Activated naive CD4-positive, alpha-beta T cell treated with anti-CD3 and anti-CD28 coated beads for 36 hours (primary cell): ENCODE measurements at regions of chr19 and their contacts with region 1.

Region 1: GRCh38 chr19:2269244-2269947 is 12.6 kb downstream of the PEAK3 start:
- DNase-seq: peak; percentile 99
- H3K4me3 Mint-ChIP-seq: peak overlapping the region; percentile 89
- H3K27ac Mint-ChIP-seq: peak overlapping the region; percentile 92
- H3K4me1 Mint-ChIP-seq: peaks cover 43% of the 10 kb centered on the region
- H3K27me3 Mint-ChIP-seq: no peaks in the 10 kb centered on the region

Region 2: GRCh38 chr19:1905071-1905862 is 364.1 kb before region 1 on chr19 and contains the starts of genes ADAT3 and SCAMP4:
- CTCF ChIA-PET with region 1: no interaction called
- intact Hi-C with region 1: no loop called
- DNase-seq: peak; percentile 99
- H3K4me3 Mint-ChIP-seq: peak within 1 kb of the TSS; percentile 89
- H3K27ac Mint-ChIP-seq: peak within 1 kb of the TSS; percentile 89
- H3K4me1 Mint-ChIP-seq: peaks cover 46% of the 10 kb centered on the region
- H3K27me3 Mint-ChIP-seq: no peaks in the 10 kb centered on the region
- total RNA-seq, gene ADAT3: 3.0 to 3.4 TPM
- total RNA-seq, gene SCAMP4: 12.1 to 14.5 TPM

Region 3: GRCh38 chr19:2050991-2051772 is 218.2 kb before region 1 on chr19 and contains the start of gene MKNK2:
- CTCF ChIA-PET with region 1: no interaction called
- intact Hi-C with region 1: loop called (anchors 1 kb)
- DNase-seq: peak; percentile 93
- H3K4me3 Mint-ChIP-seq: peak within 1 kb of the TSS; percentile 85
- H3K27ac Mint-ChIP-seq: peak within 1 kb of the TSS; percentile 93
- H3K4me1 Mint-ChIP-seq: peaks cover 53% of the 10 kb centered on the region
- H3K27me3 Mint-ChIP-seq: no peaks in the 10 kb centered on the region
- total RNA-seq, gene MKNK2: 155 to 157 TPM

Region 4: GRCh38 chr19:2253106-2254053 is 16.0 kb before region 1 on chr19:
- CTCF ChIA-PET with region 1: interaction called, 16 read pairs
- intact Hi-C with region 1: loop called (anchors 1 kb)
- DNase-seq: peak; percentile 59
- H3K4me3 Mint-ChIP-seq: peak overlapping the region; percentile 43
- H3K27ac Mint-ChIP-seq: no peak overlapping the region
- H3K4me1 Mint-ChIP-seq: peaks cover 28% of the 10 kb centered on the region
- H3K27me3 Mint-ChIP-seq: peaks cover 12% of the 10 kb centered on the region

Region 5: GRCh38 chr19:2391118-2391725 is 121.8 kb after region 1 on chr19:
- CTCF ChIA-PET with region 1: interaction called, 3 read pairs
- intact Hi-C with region 1: loop called (anchors 2 kb)
- DNase-seq: peak; percentile 56
- H3K4me3 Mint-ChIP-seq: no peak overlapping the region
- H3K27ac Mint-ChIP-seq: no peak overlapping the region
- H3K4me1 Mint-ChIP-seq: peaks cover 15% of the 10 kb centered on the region
- H3K27me3 Mint-ChIP-seq: no peaks in the 10 kb centered on the region